ENCODE measurements at regions of chr5 and their contacts with region 1.

Region 1: GRCh38 chr5:131694926-131695325 is 59.9 kb upstream of the RAPGEF6 start:
- DNase-seq: no peak
- ATAC-seq: no peak
- H3K4me3 Mint-ChIP-seq: no peak overlapping the region
- H3K27ac Mint-ChIP-seq: no peak overlapping the region
- H3K4me1 Mint-ChIP-seq: no peaks in the 10 kb centered on the region
- H3K27me3 Mint-ChIP-seq: no peaks in the 10 kb centered on the region
- CTCF ChIP-seq: no peak

Region 2: GRCh38 chr5:131664929-131665328 is 30.0 kb before region 1 on chr5:
- CTCF ChIA-PET with region 1: no interaction called
- POLR2A ChIA-PET with region 1: no interaction called
- intact Hi-C with region 1: loop called (anchors 5 kb)
- DNase-seq: no peak
- ATAC-seq: no peak
- H3K4me3 Mint-ChIP-seq: no peak overlapping the region
- H3K27ac Mint-ChIP-seq: no peak overlapping the region
- H3K4me1 Mint-ChIP-seq: no peaks in the 10 kb centered on the region
- H3K27me3 Mint-ChIP-seq: no peaks in the 10 kb centered on the region
- CTCF ChIP-seq: no peak

Region 3: GRCh38 chr5:133688391-133688790 is 1993.5 kb after region 1 on chr5:
- CTCF ChIA-PET with region 1: no interaction called
- POLR2A ChIA-PET with region 1: no interaction called
- intact Hi-C with region 1: no loop called
- DNase-seq: no peak
- ATAC-seq: no peak
- H3K4me3 Mint-ChIP-seq: no peak overlapping the region
- H3K27ac Mint-ChIP-seq: no peak overlapping the region
- H3K4me1 Mint-ChIP-seq: no peaks in the 10 kb centered on the region
- H3K27me3 Mint-ChIP-seq: peaks cover 36% of the 10 kb centered on the region
- CTCF ChIP-seq: no peak

Measured in activated B cell treated with CpG ODN at 0.5 μM for 24 hours (primary cell).